Activated CD4-positive, alpha-beta T cell treated with anti-CD3 and anti-CD28 coated beads, Interleukin-2, amount 10 ng/mL, durations not matched to agents 7 days and 5 days (primary cell): ENCODE measurements at regions of chr7 and their contacts with region 1.

Region 1: DNA sequence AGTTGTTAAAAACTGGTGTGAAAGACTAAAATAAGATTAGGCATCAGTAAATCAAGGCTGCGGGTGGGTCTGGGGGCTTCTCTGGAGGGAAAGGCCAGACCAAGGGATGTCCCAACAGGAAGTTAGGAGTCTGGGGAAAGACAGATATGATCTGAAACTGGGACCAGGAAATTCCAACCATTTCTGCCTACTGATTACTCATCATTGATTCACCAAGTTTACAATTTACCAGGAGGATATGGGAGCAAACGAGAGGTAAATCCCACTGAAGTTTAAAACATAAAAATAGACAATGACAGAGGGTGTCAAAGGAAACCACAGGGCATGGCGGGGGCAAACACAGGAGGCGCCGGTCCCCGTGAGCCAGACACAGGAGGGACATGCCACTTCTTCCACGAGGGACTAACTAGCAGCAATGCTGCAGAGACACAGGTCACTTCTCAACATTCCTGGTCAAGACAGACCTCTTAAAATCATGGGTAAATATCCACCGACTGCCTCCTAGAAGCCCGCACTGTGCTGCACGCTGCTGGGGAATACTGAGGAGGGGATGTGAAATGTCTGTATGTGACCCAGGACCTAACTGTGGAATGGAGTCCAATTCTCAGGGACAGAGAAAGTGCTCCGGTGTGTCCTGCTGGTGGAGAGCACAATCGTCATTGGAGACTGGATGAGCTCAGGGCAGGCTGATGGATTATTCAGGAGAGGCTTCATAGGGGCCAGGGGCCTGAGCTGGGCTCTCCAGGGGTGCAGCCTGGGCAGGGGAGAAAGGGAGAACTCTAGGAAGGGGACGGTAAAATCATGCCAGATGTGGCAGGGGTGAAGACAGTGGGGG is 153.4 kb upstream of the KLF14 start:
- DNase-seq: no peak
- H3K4me3 Mint-ChIP-seq: no peak overlapping the region
- H3K27ac Mint-ChIP-seq: peak overlapping the region; percentile 31
- H3K4me1 Mint-ChIP-seq: peaks cover 38% of the 10 kb centered on the region
- H3K27me3 Mint-ChIP-seq: no peaks in the 10 kb centered on the region

Region 2: DNA sequence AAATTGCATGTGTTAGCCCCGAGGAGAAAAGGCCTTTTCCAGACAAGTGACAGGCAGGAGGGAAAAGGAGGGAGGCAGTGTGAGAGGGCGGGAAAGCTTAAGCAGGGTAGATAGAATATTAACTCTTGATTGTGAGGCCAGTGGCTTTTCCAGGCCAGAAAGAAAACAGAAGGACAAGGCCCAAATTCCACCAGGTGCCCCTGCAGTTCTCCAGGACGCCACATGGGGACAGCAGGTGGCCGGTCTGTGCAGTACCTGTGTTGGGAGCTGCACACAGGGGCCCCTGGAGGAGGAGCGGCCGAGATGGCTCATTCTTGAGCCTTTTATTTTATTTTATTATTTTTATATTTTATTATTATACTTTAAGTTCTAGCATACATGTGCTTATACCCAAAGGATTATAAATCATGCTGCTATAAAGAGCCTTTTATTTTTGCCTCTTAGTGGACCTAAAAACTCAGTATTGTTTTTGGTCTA is 12.1 kb before region 1 on chr7:
- CTCF ChIA-PET with region 1: interaction called, 17 read pairs
- POLR2A ChIA-PET with region 1: no interaction called
- DNase-seq: peak; percentile 56
- H3K4me3 Mint-ChIP-seq: no peak overlapping the region
- H3K27ac Mint-ChIP-seq: peak overlapping the region; percentile 51
- H3K4me1 Mint-ChIP-seq: peaks cover 22% of the 10 kb centered on the region
- H3K27me3 Mint-ChIP-seq: no peaks in the 10 kb centered on the region